Ascending aorta (tissue), 2 donors: ENCODE measurements at regions of chr5 and their contacts with region 1.

Region 1: GRCh38 chr5:113606298-113607134 is 93.0 kb downstream of the YTHDC2 start:
- DNase-seq: no peak
- H3K4me3 ChIP-seq: no peak overlapping the region
- H3K27ac ChIP-seq: no peak overlapping the region
- H3K4me1 ChIP-seq: no peaks in the 10 kb centered on the region
- H3K27me3 ChIP-seq: no peaks in the 10 kb centered on the region
- CTCF ChIP-seq: peak; percentile 45 to 76 (median 65)

Region 2: DNA sequence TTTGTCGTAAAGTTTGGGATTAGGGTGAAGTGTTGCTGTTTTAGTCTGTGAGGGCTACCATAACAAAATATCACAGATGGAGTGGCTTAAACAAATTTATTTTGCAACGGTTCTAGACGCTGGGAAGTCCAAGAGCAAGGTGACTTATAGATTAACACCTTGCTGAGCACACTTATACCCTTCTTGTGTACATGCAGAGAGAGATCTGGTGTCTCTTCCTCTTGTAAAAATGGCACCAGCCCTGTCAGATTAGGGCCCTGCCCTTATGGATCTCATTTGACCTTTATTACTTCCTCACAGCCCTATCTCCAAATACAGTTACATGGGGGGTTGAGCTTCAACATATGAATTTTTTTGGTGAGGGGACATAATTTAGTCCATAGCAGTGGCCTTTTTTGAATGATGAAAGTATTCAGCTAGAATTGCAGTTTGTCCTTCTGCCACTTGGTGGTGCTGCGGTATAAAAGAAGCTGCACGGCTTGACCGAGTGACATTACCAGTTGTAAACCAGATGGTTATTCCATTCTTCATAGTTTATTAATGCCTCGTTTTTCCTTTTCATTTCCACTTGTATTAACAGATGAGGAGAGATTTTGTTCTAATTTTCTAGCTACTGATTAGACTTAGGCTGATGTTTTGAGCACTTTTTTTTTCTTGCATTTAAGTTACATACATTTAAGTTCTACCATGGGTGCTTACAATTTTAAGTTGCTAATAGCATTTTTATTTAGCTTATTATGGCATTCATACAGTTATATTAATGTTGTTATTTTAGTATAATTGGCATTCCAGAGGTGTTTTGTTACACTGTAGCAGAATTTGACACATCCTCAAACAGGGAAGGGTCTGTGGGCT is 610.5 kb before region 1 on chr5:
- intact Hi-C with region 1: loop called (anchors 5 kb)
- DNase-seq: peak in 1 of 2 donors; percentile 85
- H3K4me3 ChIP-seq: no peak overlapping the region
- H3K27ac ChIP-seq: no peak overlapping the region
- H3K4me1 ChIP-seq: peaks cover 0 to 4% of the 10 kb centered on the region in 2 donors
- H3K27me3 ChIP-seq: no peaks in the 10 kb centered on the region
- CTCF ChIP-seq: peak; percentile 63 to 92 (median 90)

Region 3: DNA sequence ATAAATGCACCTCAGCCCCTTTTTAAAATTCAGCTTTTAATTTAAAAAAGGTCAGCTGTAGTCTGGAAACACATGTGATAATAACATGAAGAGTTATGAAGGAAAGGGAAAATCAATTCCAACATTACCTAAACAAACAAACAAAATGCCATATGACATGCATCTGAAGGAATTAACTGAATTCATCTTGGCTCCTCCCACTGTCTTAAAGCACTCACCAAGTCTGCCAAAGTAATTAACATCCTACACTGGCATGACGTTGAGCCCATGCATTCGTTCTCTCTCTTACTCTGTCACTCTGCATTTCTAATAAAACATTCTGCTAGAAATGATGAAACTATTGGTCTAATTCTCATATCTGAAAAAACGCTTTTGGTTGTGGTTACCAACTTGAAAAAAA is 209.5 kb before region 1 on chr5:
- intact Hi-C with region 1: no loop called
- DNase-seq: no peak
- H3K4me3 ChIP-seq: no peak overlapping the region
- H3K27ac ChIP-seq: no peak overlapping the region
- H3K4me1 ChIP-seq: no peaks in the 10 kb centered on the region
- H3K27me3 ChIP-seq: no peaks in the 10 kb centered on the region
- CTCF ChIP-seq: no peak